ENCODE measurements at regions of chr10 and their contacts with region 1.

Region 1: GRCh38 chr10:93425861-93426260 is 56.3 kb downstream of the MYOF start:
- DNase-seq: no peak
- H3K4me3 Mint-ChIP-seq: peak overlapping the region; percentile 48
- H3K27ac Mint-ChIP-seq: peak overlapping the region; percentile 97
- H3K4me1 Mint-ChIP-seq: peaks cover 51% of the 10 kb centered on the region
- H3K27me3 Mint-ChIP-seq: no peaks in the 10 kb centered on the region
- CTCF ChIP-seq: no peak

Region 2: DNA sequence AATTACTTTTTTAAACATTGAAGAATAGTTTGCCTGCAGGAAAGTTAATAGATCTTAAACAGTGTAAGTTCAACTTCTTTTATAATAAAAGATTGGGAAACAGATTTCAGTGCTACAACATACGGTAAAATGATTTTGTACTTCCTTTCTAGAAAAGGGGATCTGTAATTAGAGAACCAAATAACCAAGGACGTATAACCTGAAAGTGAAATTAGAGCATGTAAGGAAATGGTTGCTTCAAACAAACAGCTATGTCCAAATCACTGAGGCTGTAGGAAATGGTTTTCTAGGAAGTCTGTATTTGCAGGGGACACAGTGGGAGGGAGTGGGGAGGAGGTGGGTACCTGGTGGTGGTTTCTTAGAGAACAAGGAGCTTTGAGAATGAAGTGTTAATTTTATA is 635.4 kb before region 1 on chr10:
- CTCF ChIA-PET with region 1: no interaction called
- intact Hi-C with region 1: no loop called
- DNase-seq: no peak
- H3K4me3 Mint-ChIP-seq: no peak overlapping the region
- H3K27ac Mint-ChIP-seq: no peak overlapping the region
- H3K4me1 Mint-ChIP-seq: no peaks in the 10 kb centered on the region
- H3K27me3 Mint-ChIP-seq: no peaks in the 10 kb centered on the region
- CTCF ChIP-seq: no peak

Region 3: DNA sequence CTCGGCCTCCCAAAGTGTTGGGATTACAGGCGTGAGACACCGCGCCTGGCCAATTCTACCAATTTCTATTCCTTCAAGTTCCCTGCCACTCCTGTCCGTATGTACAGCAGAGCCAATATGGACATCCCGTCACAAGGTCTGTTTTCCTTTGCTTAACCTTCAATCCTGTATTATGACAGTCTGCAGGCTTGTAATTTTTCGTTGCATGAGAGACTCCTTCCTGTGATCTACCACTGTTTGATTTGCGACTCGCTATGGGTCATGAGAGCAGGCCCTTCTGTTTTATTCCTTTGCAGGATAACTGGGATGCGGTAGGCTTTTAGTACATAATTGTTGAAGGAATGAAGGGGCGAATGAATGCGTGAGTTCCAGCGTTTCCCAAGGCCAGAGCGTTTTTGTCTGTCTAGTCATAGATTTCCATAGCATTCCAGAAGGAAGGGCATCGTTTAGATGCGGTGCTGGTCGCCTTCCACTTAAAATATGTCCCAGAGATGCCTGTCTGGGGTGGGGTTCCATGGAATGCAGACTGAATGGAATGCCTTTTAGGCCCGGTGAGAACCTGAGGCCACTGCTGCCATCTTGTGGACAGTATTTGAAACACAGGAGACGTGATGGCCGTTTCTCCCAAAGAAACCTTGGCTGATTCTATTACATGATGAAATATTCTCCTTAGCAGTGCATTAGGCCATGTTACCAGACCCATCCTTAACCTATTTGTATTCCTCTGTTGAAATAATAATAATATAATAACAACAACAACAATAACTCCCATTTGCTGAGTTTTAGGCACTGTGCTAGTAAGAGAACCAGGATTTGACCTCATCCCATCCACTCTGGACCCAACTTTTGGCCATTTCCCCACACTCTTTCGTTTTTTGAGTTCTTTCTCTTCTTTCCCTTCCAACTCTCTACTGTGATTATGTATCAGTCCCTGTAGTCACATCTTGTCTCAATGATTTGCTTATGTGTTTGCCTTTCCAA is 136.9 kb before region 1 on chr10:
- CTCF ChIA-PET with region 1: no interaction called
- intact Hi-C with region 1: no loop called
- DNase-seq: peak; percentile 78
- H3K4me3 Mint-ChIP-seq: no peak overlapping the region
- H3K27ac Mint-ChIP-seq: peak overlapping the region; percentile 38
- H3K4me1 Mint-ChIP-seq: peaks cover 25% of the 10 kb centered on the region
- H3K27me3 Mint-ChIP-seq: no peaks in the 10 kb centered on the region
- CTCF ChIP-seq: peak; percentile 56

Region 4: DNA sequence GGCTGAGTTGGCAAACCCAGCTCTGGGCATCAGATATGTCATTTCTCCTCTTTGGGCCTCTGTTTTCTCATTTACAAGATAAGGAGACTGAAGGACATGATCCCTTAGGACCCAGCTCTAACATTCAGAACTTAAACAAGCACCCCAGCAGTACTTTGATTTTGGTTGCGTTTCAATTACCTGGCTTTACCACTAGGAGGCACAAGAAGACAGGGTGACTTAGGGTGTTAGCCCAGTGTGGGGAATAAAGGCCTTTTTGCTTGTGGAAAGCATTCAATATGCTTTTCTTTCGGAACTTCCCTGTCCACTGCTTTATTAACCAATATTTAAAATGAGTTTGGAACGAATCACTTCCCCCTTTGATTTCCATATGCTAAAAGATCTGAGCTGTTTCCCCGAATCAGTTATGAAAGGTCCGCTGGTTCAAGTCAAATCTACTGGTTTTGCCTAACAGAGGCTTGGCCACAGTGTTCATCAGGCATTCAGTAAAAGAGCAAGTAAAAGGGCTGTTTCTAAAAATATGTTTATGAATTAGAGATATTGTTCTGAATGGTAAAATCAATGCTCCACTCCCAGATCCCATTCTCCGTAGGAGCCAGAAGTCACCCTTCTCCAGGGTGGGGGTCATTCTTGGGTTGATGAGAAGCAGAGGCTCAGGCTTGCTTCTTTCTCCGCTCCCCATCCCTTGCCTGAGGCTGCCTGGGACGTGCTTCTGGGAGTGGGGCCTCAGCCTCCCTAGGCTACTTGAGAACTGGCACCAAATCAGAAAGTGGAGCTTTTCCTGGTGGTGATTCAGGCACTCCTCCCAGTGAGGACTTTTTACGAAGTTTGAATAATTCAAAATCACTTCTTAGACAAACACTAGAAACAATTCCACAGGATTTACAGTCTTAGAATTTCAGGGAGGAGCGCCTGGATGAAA is 49.2 kb before region 1 on chr10:
- CTCF ChIA-PET with region 1: interaction called, 3 read pairs
- intact Hi-C with region 1: loop called (anchors 5 kb)
- DNase-seq: peak; percentile 54
- H3K4me3 Mint-ChIP-seq: no peak overlapping the region
- H3K27ac Mint-ChIP-seq: peak overlapping the region; percentile 82
- H3K4me1 Mint-ChIP-seq: peaks cover 23% of the 10 kb centered on the region
- H3K27me3 Mint-ChIP-seq: no peaks in the 10 kb centered on the region
- CTCF ChIP-seq: peak; percentile 73

Region 5: DNA sequence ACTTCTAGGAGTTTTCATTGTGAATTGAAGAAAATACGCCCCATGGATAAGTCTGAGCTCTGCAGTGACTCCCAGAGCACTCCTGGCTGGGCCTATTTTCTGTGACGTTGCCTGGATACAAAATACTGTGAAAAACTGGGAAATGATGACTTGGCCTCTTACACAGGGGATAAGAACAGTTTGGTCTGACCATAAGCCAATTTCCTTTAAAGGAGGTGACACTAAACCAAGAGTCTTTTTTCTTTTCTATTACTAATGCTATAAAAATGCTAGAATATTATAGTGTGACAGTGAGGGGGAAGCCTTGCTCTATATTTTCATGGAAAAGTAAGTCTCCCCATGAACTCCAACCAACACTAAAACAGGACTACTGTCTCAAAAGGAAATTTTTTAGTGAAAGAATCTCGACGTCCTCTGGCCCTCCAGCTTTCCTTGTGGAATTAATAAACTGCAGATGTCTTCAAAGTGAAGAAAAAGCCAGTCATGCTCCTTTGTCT is 10.8 kb after region 1 on chr10:
- CTCF ChIA-PET with region 1: no interaction called
- intact Hi-C with region 1: loop called (anchors 1 kb)
- DNase-seq: no peak
- H3K4me3 Mint-ChIP-seq: peak overlapping the region; percentile 57
- H3K27ac Mint-ChIP-seq: peak overlapping the region; percentile 99
- H3K4me1 Mint-ChIP-seq: peaks cover 46% of the 10 kb centered on the region
- H3K27me3 Mint-ChIP-seq: no peaks in the 10 kb centered on the region
- CTCF ChIP-seq: no peak

Region 6: DNA sequence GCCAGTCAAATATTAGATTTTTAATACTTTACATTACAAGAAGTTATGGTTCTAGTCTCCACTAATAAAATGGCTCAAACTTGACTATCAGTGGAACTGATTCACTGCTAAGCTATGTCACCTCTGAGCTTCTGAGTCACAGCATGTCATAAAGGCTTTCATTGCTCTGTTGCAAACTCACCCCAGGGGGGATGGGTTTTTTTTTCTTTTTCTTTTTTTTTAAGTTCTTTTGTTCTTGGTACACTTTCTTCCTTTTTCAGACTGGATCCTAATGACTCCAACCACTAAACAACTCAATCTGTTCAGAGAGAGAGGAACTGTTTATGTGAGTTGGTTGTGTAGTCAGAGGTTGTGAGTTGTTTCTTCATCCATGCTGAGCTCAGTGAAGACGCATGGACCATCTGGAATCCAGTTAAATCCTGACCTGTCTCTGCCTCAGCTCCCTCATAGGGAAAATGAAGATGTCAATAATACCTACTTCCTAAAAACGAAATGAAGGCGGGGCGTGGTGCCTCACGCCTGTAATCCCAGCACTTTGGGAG is 45.3 kb after region 1 on chr10:
- CTCF ChIA-PET with region 1: no interaction called
- intact Hi-C with region 1: loop called (anchors 5 kb)
- DNase-seq: no peak
- H3K4me3 Mint-ChIP-seq: peak overlapping the region; percentile 56
- H3K27ac Mint-ChIP-seq: peak overlapping the region; percentile 77
- H3K4me1 Mint-ChIP-seq: peaks cover 50% of the 10 kb centered on the region
- H3K27me3 Mint-ChIP-seq: no peaks in the 10 kb centered on the region
- CTCF ChIP-seq: no peak